CD4-positive, alpha-beta T cell (primary cell): ENCODE measurements at regions of chr11 and their contacts with region 1.

Region 1: GRCh38 chr11:8911029-8911826 is at the start of gene AKIP1:
- DNase-seq: peak; percentile 44 to 91 (median 74)
- ATAC-seq: peak; percentile 61
- H3K4me3 ChIP-seq: peak within 1 kb of the TSS; percentile 89
- H3K4me3 Mint-ChIP-seq: peak within 1 kb of the TSS; percentile 96
- H3K27ac ChIP-seq: peak within 1 kb of the TSS; percentile 41 to 55
- H3K27ac Mint-ChIP-seq: peak within 1 kb of the TSS; percentile 82
- H3K4me1 ChIP-seq: peaks cover 27% of the 10 kb centered on the region
- H3K4me1 Mint-ChIP-seq: peaks cover 47% of the 10 kb centered on the region
- H3K27me3 ChIP-seq: no peaks in the 10 kb centered on the region
- H3K27me3 Mint-ChIP-seq: no peaks in the 10 kb centered on the region
- CTCF ChIP-seq: no peak
- total RNA-seq, gene AKIP1: 3.2 to 4.1 TPM

Region 2: GRCh38 chr11:8682303-8683114 is 228.7 kb before region 1 on chr11 and contains the starts of genes RPL27A and TRIM66:
- CTCF ChIA-PET with region 1: no interaction called
- POLR2A ChIA-PET with region 1: interaction called, 8 read pairs
- intact Hi-C with region 1: loop called in 1 of 2 experiments (anchors 5 kb)
- DNase-seq: peak; percentile 97 to 100 (median 99)
- ATAC-seq: peak; percentile 94
- H3K4me3 ChIP-seq: peak within 1 kb of the TSS; percentile 93
- H3K4me3 Mint-ChIP-seq: peak within 1 kb of the TSS; percentile 99
- H3K27ac ChIP-seq: peak within 1 kb of the TSS; percentile 92 to 96
- H3K27ac Mint-ChIP-seq: peak within 1 kb of the TSS; percentile 99
- H3K4me1 ChIP-seq: peaks cover 29% of the 10 kb centered on the region
- H3K4me1 Mint-ChIP-seq: peaks cover 52% of the 10 kb centered on the region
- H3K27me3 ChIP-seq: no peaks in the 10 kb centered on the region
- H3K27me3 Mint-ChIP-seq: no peaks in the 10 kb centered on the region
- CTCF ChIP-seq: no peak
- total RNA-seq, gene RPL27A: 1,667 to 1,721 TPM
- total RNA-seq, gene TRIM66: 6.8 to 9.8 TPM

Region 3: GRCh38 chr11:8744423-8744822 is 166.8 kb before region 1 on chr11:
- CTCF ChIA-PET with region 1: no interaction called
- POLR2A ChIA-PET with region 1: no interaction called
- intact Hi-C with region 1: no loop called
- DNase-seq: no peak
- ATAC-seq: no peak
- H3K4me3 ChIP-seq: no peak overlapping the region
- H3K4me3 Mint-ChIP-seq: no peak overlapping the region
- H3K27ac ChIP-seq: no peak overlapping the region
- H3K27ac Mint-ChIP-seq: no peak overlapping the region
- H3K4me1 ChIP-seq: no peaks in the 10 kb centered on the region
- H3K4me1 Mint-ChIP-seq: no peaks in the 10 kb centered on the region
- H3K27me3 ChIP-seq: peaks cover 6 to 11% of the 10 kb centered on the region in 2 experiments
- H3K27me3 Mint-ChIP-seq: peaks cover 43% of the 10 kb centered on the region
- CTCF ChIP-seq: no peak

Region 4: DNA sequence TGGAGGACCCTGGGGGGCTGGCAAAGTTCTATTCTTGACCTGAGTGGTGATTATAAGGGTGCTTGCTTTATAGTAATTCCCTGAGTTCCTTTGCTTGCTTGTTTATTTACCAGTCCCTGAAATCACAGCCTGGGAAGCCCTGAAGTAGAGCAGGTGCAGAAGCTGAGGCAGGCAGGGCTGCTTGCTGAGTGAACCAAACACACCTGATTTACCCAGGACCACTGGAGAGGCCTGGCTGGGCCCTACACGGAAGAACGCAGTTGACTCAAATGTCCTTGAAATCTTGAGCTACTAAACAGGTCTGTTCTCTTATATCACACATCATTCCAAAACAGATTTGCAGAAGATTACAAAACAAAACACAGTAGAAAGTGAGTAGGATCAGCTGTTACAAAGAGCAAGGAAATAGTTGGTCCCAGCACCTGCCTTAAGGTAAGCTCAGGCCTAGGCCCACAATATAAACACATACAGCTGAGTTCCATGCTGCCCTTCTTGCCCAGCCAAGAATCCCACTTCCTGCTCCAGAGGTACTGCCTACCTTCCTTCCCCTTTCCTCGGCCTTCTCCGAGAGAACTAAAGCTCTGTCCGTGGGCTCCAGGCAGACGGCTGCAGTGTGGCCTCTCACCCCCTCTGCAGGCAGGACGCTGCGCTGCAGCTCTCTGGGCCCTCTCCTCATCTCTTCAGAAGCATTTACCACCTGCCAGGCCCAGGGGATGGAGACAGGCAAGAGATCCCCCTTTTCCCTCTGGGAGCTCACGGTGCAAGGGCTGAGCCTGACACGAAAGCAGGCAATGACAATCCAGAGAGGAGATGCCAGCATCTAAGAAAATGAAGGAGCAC is 226.3 kb after region 1 on chr11:
- CTCF ChIA-PET with region 1: interaction called, 7 read pairs
- POLR2A ChIA-PET with region 1: no interaction called
- intact Hi-C with region 1: loop called in 1 of 2 experiments (anchors 2 kb)
- DNase-seq: peak; percentile 36 to 78 (median 62)
- ATAC-seq: peak; percentile 94
- H3K4me3 ChIP-seq: no peak overlapping the region
- H3K4me3 Mint-ChIP-seq: peak overlapping the region; percentile 0
- H3K27ac ChIP-seq: no peak overlapping the region
- H3K27ac Mint-ChIP-seq: peak overlapping the region; percentile 28
- H3K4me1 ChIP-seq: peaks cover 20% of the 10 kb centered on the region
- H3K4me1 Mint-ChIP-seq: peaks cover 15% of the 10 kb centered on the region
- H3K27me3 ChIP-seq: no peaks in the 10 kb centered on the region
- H3K27me3 Mint-ChIP-seq: no peaks in the 10 kb centered on the region
- CTCF ChIP-seq: peak; percentile 96

Region 5: DNA sequence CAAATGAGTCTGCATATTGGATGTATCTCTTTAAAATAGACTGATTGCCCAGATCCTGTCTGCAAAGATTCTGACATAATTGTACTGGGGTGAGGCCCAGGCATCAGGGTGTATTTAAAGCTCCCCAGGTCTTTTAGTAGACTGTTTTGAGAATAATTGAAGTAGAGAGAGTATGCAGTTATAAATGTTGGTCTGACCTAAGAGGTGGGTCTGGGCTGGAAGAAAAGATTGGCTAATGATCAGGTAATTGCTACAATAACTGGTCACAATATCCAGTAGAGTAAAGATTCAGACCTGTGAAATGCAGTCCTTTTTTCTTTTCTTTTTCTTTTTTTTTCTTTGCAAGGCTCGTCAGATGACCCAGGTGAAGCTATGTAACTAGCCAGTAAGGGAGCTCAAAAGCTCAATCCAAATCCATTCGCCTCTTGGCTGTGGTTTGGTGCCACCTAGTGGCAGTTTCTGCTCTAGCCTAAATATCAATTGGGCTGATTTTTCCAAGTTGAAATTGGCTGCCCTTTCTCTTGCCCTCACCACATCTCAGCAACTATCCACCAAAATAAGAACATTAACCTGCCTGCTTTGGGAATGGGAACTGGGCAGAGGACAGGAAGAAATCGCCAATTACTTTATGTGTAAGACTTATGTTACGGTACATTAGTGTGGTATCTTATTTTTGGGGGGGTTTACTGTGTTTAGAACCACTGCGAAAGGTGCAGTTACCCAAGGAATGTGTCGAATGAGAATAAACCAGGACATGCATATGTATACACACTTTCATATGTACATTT is 595.5 kb after region 1 on chr11:
- CTCF ChIA-PET with region 1: no interaction called
- POLR2A ChIA-PET with region 1: no interaction called
- intact Hi-C with region 1: loop called (anchors 1 to 5 kb)
- DNase-seq: peak; percentile 58 to 85 (median 69)
- ATAC-seq: peak; percentile 87
- H3K4me3 ChIP-seq: no peak overlapping the region
- H3K4me3 Mint-ChIP-seq: no peak overlapping the region
- H3K27ac ChIP-seq: no peak overlapping the region
- H3K27ac Mint-ChIP-seq: no peak overlapping the region
- H3K4me1 ChIP-seq: no peaks in the 10 kb centered on the region
- H3K4me1 Mint-ChIP-seq: peaks cover 8% of the 10 kb centered on the region
- H3K27me3 ChIP-seq: no peaks in the 10 kb centered on the region
- H3K27me3 Mint-ChIP-seq: no peaks in the 10 kb centered on the region
- CTCF ChIP-seq: peak; percentile 93

Region 6: GRCh38 chr11:10293423-10294289 is 1382.4 kb after region 1 on chr11 and contains the start of gene SBF2:
- CTCF ChIA-PET with region 1: no interaction called
- POLR2A ChIA-PET with region 1: no interaction called
- intact Hi-C with region 1: loop called in 1 of 2 experiments (anchors 10 kb)
- DNase-seq: peak; percentile 60 to 91 (median 76)
- ATAC-seq: peak; percentile 70
- H3K4me3 ChIP-seq: peak within 1 kb of the TSS; percentile 65
- H3K4me3 Mint-ChIP-seq: peak within 1 kb of the TSS; percentile 89
- H3K27ac ChIP-seq: no peak within 1 kb of the TSS
- H3K27ac Mint-ChIP-seq: peak within 1 kb of the TSS; percentile 67
- H3K4me1 ChIP-seq: peaks cover 34% of the 10 kb centered on the region
- H3K4me1 Mint-ChIP-seq: peaks cover 37% of the 10 kb centered on the region
- H3K27me3 ChIP-seq: peaks cover 5 to 23% of the 10 kb centered on the region in 2 experiments
- H3K27me3 Mint-ChIP-seq: peaks cover 33% of the 10 kb centered on the region
- CTCF ChIP-seq: no peak
- total RNA-seq, gene SBF2: 14.2 to 15.2 TPM